HepG2 (cell line): ENCODE measurements at regions of chr4 and their contacts with region 1.

Region 1: DNA sequence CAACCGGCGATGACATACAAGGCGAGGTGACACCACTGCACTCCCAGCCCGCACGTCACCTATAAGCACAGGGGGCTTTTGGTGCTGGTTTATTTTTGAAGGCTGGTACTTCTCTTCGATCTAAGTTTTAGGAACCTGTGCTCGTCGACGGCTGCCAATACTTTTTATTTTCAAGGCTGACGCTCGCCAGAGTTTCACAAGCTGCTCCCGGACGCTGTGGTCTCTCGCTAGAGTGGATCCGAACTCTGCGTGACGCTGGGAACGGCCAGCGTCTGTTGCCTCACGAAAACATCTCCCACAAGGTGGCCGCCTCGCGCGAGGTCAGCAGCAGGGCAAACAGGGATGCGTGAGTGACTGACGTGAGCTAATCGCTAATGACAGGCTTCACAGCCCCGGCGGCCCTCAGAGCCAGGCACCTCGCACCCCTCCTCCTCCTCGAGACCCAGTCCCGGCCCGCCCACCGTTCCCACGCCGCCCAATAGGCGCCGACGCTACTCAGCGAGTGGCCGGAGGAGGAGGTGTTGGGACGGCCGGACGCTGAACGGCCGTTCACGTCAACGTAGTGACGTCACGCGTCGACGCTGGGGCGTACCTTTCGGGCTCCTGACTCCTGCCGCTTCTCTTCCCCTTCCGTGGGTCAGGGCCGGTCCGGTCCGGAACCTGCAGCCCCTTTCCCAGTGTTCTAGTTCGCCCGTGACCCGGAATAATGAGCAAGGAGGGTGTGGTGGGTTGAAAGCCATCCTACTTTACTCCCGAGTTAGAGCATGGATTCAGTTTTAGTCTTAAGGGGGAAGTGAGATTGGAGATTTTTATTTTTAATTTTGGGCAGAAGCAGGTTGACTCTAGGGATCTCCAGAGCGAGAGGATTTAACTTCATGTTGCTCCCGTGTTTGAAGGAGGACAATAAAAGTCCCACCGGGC is at the start of gene CLCN3:
- DNase-seq: peak; percentile 94
- ATAC-seq: peak; percentile 96
- H3K4me3 ChIP-seq: peak within 1 kb of the TSS; percentile 79 to 84 (median 80)
- H3K27ac ChIP-seq: peak within 1 kb of the TSS; percentile 86
- H3K4me1 ChIP-seq: peaks cover 55% of the 10 kb centered on the region
- H3K27me3 ChIP-seq: no peaks in the 10 kb centered on the region
- CTCF ChIP-seq: peak; percentile 57
- EP300 ChIP-seq: no peak
- POLR2A ChIP-seq: peak; percentile 83 to 89
- RAD21 ChIP-seq: 0 out of 2 replicates have a peak, but pooled peaks have one; percentile 7
- total RNA-seq, gene CLCN3: 21.5 and 23.7 TPM in 2 replicates

Region 2: GRCh38 chr4:169640261-169640870 is 20.1 kb after region 1 on chr4:
- CTCF ChIA-PET with region 1: no interaction called
- POLR2A ChIA-PET with region 1: no interaction called
- in situ Hi-C with region 1: no loop called
- intact Hi-C with region 1: no loop called
- DNase-seq: no peak
- ATAC-seq: no peak
- H3K4me3 ChIP-seq: no peak overlapping the region
- H3K27ac ChIP-seq: no peak overlapping the region
- H3K4me1 ChIP-seq: no peaks in the 10 kb centered on the region
- H3K27me3 ChIP-seq: no peaks in the 10 kb centered on the region
- CTCF ChIP-seq: no peak
- EP300 ChIP-seq: no peak
- POLR2A ChIP-seq: no peak
- RAD21 ChIP-seq: no peak

Region 3: GRCh38 chr4:169659716-169660670 is 39.8 kb after region 1 on chr4:
- CTCF ChIA-PET with region 1: no interaction called
- POLR2A ChIA-PET with region 1: interaction called, 10 read pairs
- in situ Hi-C with region 1: loop called (anchors 5 kb)
- intact Hi-C with region 1: loop called (anchors 2 kb)
- DNase-seq: peak; percentile 91
- ATAC-seq: peak; percentile 98
- H3K4me3 ChIP-seq: peak overlapping the region; percentile 45 to 51 (median 50); a peak in 5 of 6 replicates
- H3K27ac ChIP-seq: peak overlapping the region; percentile 64
- H3K4me1 ChIP-seq: peaks cover 41% of the 10 kb centered on the region
- H3K27me3 ChIP-seq: no peaks in the 10 kb centered on the region
- CTCF ChIP-seq: no peak
- EP300 ChIP-seq: peak in 1 of 2 experiments; percentile 46; a peak in 1 of 4 replicates
- POLR2A ChIP-seq: peak in 1 of 2 experiments; percentile 27; a peak in 1 of 4 replicates
- RAD21 ChIP-seq: no peak

Region 4: GRCh38 chr4:169668069-169668721 is 48.0 kb after region 1 on chr4:
- CTCF ChIA-PET with region 1: no interaction called
- POLR2A ChIA-PET with region 1: no interaction called
- in situ Hi-C with region 1: loop called (anchors 5 kb)
- intact Hi-C with region 1: loop called (anchors 2 kb)
- DNase-seq: peak; percentile 87
- ATAC-seq: peak; percentile 99
- H3K4me3 ChIP-seq: peak overlapping the region in 2 of 3 experiments; percentile 1 to 6; a peak in 1 of 6 replicates
- H3K27ac ChIP-seq: peak overlapping the region; percentile 57
- H3K4me1 ChIP-seq: peaks cover 52% of the 10 kb centered on the region
- H3K27me3 ChIP-seq: no peaks in the 10 kb centered on the region
- CTCF ChIP-seq: no peak
- EP300 ChIP-seq: 0 out of 4 replicates have a peak, but pooled peaks of 1 of the 2 experiments have one; percentile 28
- POLR2A ChIP-seq: no peak
- RAD21 ChIP-seq: no peak

Region 5: GRCh38 chr4:169690787-169691186 is 70.6 kb after region 1 on chr4:
- CTCF ChIA-PET with region 1: no interaction called
- POLR2A ChIA-PET with region 1: no interaction called
- in situ Hi-C with region 1: no loop called
- intact Hi-C with region 1: no loop called
- DNase-seq: no peak
- ATAC-seq: no peak
- H3K4me3 ChIP-seq: no peak overlapping the region
- H3K27ac ChIP-seq: no peak overlapping the region
- H3K4me1 ChIP-seq: no peaks in the 10 kb centered on the region
- H3K27me3 ChIP-seq: no peaks in the 10 kb centered on the region
- CTCF ChIP-seq: no peak
- EP300 ChIP-seq: no peak
- POLR2A ChIP-seq: no peak
- RAD21 ChIP-seq: no peak

Region 6: DNA sequence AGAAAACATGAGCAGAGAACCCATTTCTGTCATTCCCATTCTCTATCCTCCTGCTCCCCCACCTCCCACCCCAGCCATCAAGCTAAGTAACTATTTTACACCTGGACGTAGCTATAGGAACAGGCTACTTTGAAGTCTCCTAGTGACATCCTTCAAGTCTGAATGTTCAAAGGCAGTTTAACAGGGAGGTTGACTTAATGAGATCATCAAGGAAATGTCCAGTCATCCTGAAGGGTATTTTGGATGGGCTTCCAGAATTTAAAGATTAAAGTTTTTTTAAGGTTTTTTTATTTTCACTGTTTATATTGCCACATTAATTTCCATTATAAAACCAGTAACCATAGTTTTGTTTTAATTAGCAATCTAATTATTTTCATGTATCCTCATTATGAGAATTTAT is 96.5 kb after region 1 on chr4:
- CTCF ChIA-PET with region 1: no interaction called
- POLR2A ChIA-PET with region 1: no interaction called
- in situ Hi-C with region 1: loop called (anchors 10 kb)
- intact Hi-C with region 1: no loop called
- DNase-seq: no peak
- ATAC-seq: no peak
- H3K4me3 ChIP-seq: no peak overlapping the region
- H3K27ac ChIP-seq: no peak overlapping the region
- H3K4me1 ChIP-seq: no peaks in the 10 kb centered on the region
- H3K27me3 ChIP-seq: no peaks in the 10 kb centered on the region
- CTCF ChIP-seq: no peak
- EP300 ChIP-seq: no peak
- POLR2A ChIP-seq: no peak
- RAD21 ChIP-seq: no peak

Region 7: GRCh38 chr4:170027181-170027829 is 407.1 kb after region 1 on chr4:
- CTCF ChIA-PET with region 1: no interaction called
- POLR2A ChIA-PET with region 1: interaction called, 3 read pairs
- in situ Hi-C with region 1: no loop called
- intact Hi-C with region 1: loop called (anchors 1 kb)
- DNase-seq: peak; percentile 78
- ATAC-seq: peak; percentile 69
- H3K4me3 ChIP-seq: peak overlapping the region; percentile 68 to 96 (median 90)
- H3K27ac ChIP-seq: no peak overlapping the region
- H3K4me1 ChIP-seq: peaks cover 11% of the 10 kb centered on the region
- H3K27me3 ChIP-seq: peaks cover 0 to 15% of the 10 kb centered on the region in 2 experiments; a peak in 3 of 5 replicates
- CTCF ChIP-seq: 0 out of 2 replicates have a peak, but pooled peaks have one; percentile 11
- EP300 ChIP-seq: no peak
- POLR2A ChIP-seq: no peak
- RAD21 ChIP-seq: peak; percentile 45

Region 8: GRCh38 chr4:170089668-170090351 is 469.6 kb after region 1 on chr4 and contains the start of gene AADAT:
- CTCF ChIA-PET with region 1: no interaction called
- POLR2A ChIA-PET with region 1: no interaction called
- in situ Hi-C with region 1: loop called (anchors 25 kb)
- intact Hi-C with region 1: loop called (anchors 10 kb)
- DNase-seq: peak; percentile 81
- ATAC-seq: peak; percentile 93
- H3K4me3 ChIP-seq: peak within 1 kb of the TSS; percentile 63 to 81 (median 77)
- H3K27ac ChIP-seq: peak within 1 kb of the TSS; percentile 63
- H3K4me1 ChIP-seq: peaks cover 45% of the 10 kb centered on the region
- H3K27me3 ChIP-seq: no peaks in the 10 kb centered on the region
- CTCF ChIP-seq: peak; percentile 92
- EP300 ChIP-seq: no peak
- POLR2A ChIP-seq: peak in 1 of 2 experiments; percentile 64; a peak in 3 of 4 replicates
- RAD21 ChIP-seq: peak; percentile 95
- total RNA-seq, gene AADAT: 6.1 and 6.8 TPM in 2 replicates